ENCODE measurements at regions of chr2 and their contacts with region 1.

Region 1: DNA sequence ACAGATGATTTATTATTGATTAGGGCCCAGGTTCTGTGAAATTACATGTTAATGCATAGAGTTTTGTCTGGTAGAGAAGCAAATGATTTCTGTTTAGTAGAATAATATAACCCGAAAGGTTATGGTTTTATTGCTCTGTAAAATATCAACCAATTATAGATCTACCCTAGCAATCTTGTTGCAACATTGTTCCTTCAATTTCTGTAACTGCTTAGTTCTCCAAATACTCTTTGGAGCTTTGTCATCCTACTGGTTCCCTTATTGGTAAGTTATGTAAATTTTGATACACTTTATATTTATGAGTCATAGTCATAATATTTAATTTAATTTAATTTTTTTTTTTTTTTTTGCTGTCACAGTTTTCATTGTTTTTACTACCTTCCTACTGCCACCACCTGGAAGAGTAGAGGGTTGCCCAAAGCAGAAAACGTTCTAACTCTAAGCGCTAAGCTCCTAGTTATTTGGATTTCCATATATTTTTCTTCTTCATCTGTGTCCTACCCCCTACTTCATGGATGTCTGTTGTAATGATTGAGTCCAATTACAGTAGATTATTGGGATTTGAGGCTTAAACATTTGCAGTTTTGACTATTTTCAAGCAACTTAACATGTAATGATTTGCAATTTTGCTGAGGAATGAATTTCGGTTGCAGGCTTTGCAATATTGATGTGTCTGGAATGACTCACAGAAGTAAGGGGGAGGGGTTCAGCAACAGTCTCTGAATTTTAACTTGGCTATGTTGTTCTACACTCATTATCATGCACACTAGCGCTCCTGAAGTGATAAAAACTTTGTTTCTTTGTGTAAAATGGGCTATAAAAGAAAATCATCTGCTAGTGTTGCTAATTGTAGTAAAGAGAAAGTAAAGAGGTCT is 51.1 kb downstream of the NABP1 start:
- DNase-seq: no peak
- ATAC-seq: peak; percentile 44
- H3K4me3 Mint-ChIP-seq: no peak overlapping the region
- H3K27ac Mint-ChIP-seq: no peak overlapping the region
- H3K4me1 Mint-ChIP-seq: peaks cover 3% of the 10 kb centered on the region; the same call in 1 of the 2 replicates
- H3K27me3 Mint-ChIP-seq: no peaks in the 10 kb centered on the region
- CTCF ChIP-seq: no peak

Region 2: DNA sequence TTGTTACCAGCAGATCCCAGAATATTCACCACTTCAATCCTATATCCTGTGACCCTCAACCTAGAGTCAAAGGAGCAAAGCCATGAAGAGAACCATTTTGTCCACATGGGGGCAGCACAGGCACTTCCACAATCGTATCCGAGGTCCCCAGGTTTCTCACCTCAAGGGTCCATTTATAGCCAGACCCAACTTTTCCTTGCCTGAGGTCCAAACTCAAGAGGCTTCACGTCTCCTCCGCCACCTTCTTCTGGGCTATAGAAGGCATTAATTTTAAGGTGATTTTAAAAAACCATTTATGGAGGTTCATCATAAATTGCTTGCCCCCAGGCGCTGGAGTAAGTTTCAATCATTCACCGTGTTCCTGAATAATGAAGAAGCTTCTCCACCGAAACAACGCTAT is 162.6 kb before region 1 on chr2:
- CTCF ChIA-PET with region 1: interaction called, 11 read pairs
- POLR2A ChIA-PET with region 1: no interaction called
- DNase-seq: peak; percentile 86
- ATAC-seq: peak; percentile 90
- H3K4me3 Mint-ChIP-seq: no peak overlapping the region
- H3K27ac Mint-ChIP-seq: no peak overlapping the region
- H3K4me1 Mint-ChIP-seq: peaks cover 9% of the 10 kb centered on the region
- H3K27me3 Mint-ChIP-seq: no peaks in the 10 kb centered on the region
- CTCF ChIP-seq: peak; percentile 54; the same call in 1 of the 2 replicates

Region 3: DNA sequence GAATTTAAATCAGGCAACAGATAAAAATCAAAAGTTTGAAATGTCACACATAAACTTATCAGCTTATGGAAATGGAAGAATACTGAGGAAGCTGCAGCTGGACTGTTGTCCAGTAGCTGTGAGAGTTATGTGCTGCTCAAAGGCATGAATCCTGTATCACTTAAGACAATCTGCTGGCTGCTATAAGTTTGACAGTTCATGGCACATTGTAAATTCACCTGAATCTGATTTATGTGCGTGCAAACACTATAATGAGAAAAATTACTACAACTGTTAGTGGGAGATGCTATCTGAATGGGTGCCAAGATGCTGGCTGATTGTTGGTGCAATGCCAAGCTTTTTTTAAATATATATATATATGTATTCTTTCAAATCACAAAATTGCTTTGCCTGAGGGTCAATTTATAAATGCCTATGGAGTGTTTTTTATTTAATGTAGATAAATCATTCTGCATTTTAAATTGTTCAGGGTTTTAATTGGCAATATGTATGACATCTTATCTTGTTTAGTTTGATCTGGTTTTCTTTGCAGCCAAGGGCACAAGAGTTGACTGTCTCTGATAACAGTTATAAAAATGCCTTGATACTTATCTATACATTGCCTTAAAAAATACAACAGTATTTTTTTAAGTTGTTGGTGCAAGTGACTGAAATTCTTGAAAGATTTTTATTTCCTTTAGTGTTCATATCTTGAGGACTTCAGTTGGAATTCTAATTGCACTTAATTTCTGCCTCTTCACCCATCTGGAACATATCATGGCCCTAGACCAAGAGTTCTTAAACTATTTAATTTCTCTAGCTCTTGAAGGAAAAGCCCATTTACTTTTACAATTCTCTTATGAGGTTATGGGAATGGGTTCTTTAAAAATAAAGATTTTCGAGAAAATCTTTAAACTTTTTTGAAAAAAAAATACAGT is 69.2 kb after region 1 on chr2:
- CTCF ChIA-PET with region 1: no interaction called
- POLR2A ChIA-PET with region 1: no interaction called
- DNase-seq: no peak
- ATAC-seq: no peak
- H3K4me3 Mint-ChIP-seq: no peak overlapping the region
- H3K27ac Mint-ChIP-seq: no peak overlapping the region
- H3K4me1 Mint-ChIP-seq: no peaks in the 10 kb centered on the region
- H3K27me3 Mint-ChIP-seq: no peaks in the 10 kb centered on the region
- CTCF ChIP-seq: no peak

Measured in WTC11 (cell line).